ENCODE measurements at regions of chr6 and their contacts with region 1.

Region 1: GRCh38 chr6:2952557-2953095 is 18.7 kb downstream of the SERPINB6 start:
- DNase-seq: peak; percentile 81 to 82 (median 82)
- H3K4me3 ChIP-seq: no peak overlapping the region
- H3K27ac ChIP-seq: no peak overlapping the region
- H3K4me1 ChIP-seq: peaks cover 0 to 20% (median 10%) of the 10 kb centered on the region in 4 experiments
- H3K27me3 ChIP-seq: no peaks in the 10 kb centered on the region

Region 2: DNA sequence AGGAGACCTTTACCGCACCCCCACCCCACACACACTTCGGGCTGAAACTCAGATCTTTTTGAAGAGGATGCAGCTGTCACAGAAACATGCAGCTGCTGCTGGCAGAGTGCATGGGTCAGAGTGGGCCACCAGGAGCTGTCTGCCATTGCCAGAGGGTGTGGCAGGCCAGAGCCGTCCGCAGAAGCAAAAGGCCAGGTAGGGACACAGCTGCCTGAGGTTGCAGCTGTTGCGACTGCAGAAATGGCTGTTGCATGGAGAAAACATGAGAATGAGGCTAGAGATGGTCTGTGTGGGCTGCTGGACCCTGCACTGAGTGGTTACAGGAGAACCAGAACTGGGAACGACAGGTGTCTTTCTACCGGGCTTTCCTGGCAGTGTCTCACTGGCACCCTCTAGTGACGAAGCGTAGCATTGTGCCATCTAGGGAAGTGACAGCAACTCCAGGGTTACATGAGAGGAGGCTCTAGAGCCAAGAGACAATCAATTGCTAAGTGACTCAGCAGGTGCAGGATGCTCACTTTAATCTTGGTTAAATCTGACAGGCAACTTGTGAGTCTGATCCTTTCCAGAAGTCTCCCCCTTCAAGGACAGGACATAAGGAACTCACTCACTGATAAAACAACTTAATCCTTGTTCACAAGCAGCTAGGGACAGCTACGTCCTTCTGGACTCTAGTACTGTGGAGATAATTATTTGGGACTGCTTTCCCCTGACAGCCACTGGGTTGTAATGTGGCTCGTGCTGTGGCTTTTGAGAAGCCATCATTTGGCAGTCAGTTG is 20.5 kb before region 1 on chr6:
- CTCF ChIA-PET with region 1: interaction called, 129 read pairs
- POLR2A ChIA-PET with region 1: no interaction called
- DNase-seq: peak; percentile 84 to 91 (median 90)
- H3K4me3 ChIP-seq: peak overlapping the region in 4 of 7 experiments; percentile 21 to 67 (median 52)
- H3K27ac ChIP-seq: no peak overlapping the region
- H3K4me1 ChIP-seq: peaks cover 0 to 21% (median 10%) of the 10 kb centered on the region in 4 experiments
- H3K27me3 ChIP-seq: no peaks in the 10 kb centered on the region

Region 3: DNA sequence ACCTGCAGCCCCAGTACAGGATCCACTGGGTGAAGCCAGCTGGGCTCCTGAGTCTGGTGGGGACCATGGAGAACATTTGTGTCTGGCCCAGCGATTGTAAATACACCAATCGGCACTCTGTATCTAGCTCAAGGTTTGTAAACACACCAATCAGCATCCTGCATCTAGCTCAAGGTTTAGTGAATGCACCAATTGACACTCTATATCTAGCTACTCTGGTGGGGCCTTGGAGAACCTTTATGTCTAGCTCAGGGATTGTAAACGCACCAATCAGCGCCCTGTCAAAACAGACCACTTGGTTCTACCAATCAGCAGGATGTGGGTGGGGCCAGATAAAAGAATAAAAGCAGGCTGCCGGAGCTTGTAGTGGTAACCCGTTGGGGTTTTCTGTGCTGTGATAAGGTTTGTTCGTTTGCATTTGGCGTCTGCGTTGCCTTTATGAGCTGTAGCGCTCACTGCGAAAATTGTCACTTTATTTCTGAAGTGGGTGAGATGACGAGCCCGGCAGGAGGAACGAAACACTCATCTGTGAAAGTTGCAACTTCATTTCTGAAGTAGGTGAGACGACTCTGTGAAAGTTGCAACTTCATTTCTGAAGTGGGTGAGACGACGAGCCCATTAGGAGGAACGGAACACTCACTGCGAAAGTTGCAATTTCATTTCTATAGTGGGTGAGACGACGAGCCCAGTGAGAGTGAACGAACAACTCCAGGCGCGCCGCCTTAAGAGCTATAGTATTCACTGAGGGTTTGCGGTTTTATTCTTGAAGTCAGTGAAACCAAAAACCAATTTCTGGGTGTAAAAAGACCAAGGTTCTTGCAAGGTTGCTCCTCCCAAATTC is 12.4 kb before region 1 on chr6:
- CTCF ChIA-PET with region 1: interaction called, 129 read pairs
- POLR2A ChIA-PET with region 1: interaction called, 3 read pairs
- DNase-seq: peak in 2 of 3 donors; percentile 55 to 56
- H3K4me3 ChIP-seq: peak overlapping the region in 2 of 7 experiments; percentile 26 to 33
- H3K27ac ChIP-seq: no peak overlapping the region
- H3K4me1 ChIP-seq: peaks cover 11 to 48% (median 40%) of the 10 kb centered on the region in 4 experiments
- H3K27me3 ChIP-seq: no peaks in the 10 kb centered on the region

Region 4: GRCh38 chr6:2966347-2966746 is 13.7 kb after region 1 on chr6:
- CTCF ChIA-PET with region 1: interaction called, 14 read pairs
- POLR2A ChIA-PET with region 1: interaction called, 5 read pairs
- DNase-seq: no peak
- H3K4me3 ChIP-seq: no peak overlapping the region
- H3K27ac ChIP-seq: peak overlapping the region in 1 of 2 experiments; percentile 35
- H3K4me1 ChIP-seq: peaks cover 3 to 57% (median 27%) of the 10 kb centered on the region in 4 experiments
- H3K27me3 ChIP-seq: no peaks in the 10 kb centered on the region

Region 5: GRCh38 chr6:2976571-2977085 is 24.0 kb after region 1 on chr6:
- CTCF ChIA-PET with region 1: interaction called, 11 read pairs
- POLR2A ChIA-PET with region 1: interaction called, 3 read pairs
- DNase-seq: no peak
- H3K4me3 ChIP-seq: no peak overlapping the region
- H3K27ac ChIP-seq: no peak overlapping the region
- H3K4me1 ChIP-seq: peaks cover 8 to 35% (median 14%) of the 10 kb centered on the region in 4 experiments
- H3K27me3 ChIP-seq: no peaks in the 10 kb centered on the region